Right ventricle myocardium superior (tissue), 1 donor: ENCODE measurements at regions of chr15 and their contacts with region 1.

Region 1: GRCh38 chr15:96303503-96304056 is 26.9 kb upstream of the NR2F2 start:
- DNase-seq: no peak
- ATAC-seq: no peak

Region 2: GRCh38 chr15:96160269-96160668 is 143.3 kb before region 1 on chr15:
- intact Hi-C with region 1: loop called (anchors 10 kb)
- DNase-seq: peak; percentile 70
- ATAC-seq: peak; percentile 60